OCI-LY7 (cell line): ENCODE measurements at regions of chr3 and their contacts with region 1.

Region 1: DNA sequence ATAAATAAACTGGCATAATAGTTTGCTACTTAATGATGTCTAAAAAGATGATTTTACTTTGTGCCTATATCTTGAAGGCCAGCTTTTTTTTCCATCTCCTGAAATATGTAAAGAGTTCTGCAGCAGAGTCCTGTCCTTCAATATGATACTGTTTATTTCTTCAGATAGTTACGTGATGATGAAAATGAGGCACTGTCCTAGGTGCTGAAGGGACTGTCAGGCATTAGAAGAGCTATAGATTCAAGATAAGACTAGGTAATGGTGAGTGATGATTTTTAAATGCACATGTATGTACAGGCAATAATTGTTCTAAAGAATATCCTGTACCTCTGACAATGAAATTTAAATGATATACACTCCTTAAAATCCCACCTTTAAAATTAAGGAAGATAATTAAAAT is 326.9 kb upstream of the DNAJC19 start:
- DNase-seq: peak; percentile 13
- H3K4me3 ChIP-seq: no peak overlapping the region
- H3K27ac ChIP-seq: no peak overlapping the region
- H3K4me1 ChIP-seq: peaks cover 3% of the 10 kb centered on the region
- CTCF ChIP-seq: no peak

Region 2: GRCh38 chr3:181230258-181230657 is 86.2 kb before region 1 on chr3:
- CTCF ChIA-PET with region 1: no interaction called
- POLR2A ChIA-PET with region 1: no interaction called
- intact Hi-C with region 1: no loop called
- DNase-seq: peak; percentile 1
- H3K4me3 ChIP-seq: no peak overlapping the region
- H3K27ac ChIP-seq: no peak overlapping the region
- H3K4me1 ChIP-seq: no peaks in the 10 kb centered on the region
- CTCF ChIP-seq: peak; percentile 45; the same call in 1 of the 2 replicates

Region 3: DNA sequence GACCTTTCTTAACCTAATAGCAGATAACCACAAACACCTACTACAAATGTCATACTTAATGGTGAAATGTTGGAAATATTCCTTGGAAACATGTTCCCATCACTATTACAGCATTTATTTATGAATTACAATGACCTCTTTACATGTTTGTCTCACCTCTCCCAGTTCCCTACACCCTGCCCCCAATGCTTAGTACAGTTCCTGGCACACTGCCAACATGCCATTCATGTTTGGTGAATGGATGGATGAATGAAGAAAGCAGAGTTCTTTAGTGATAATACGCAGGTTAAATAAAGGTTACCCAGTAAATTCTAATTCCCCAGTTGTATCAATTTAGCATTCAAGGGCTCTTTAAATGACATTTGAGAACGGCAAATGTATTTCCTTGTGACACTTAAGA is 1216.9 kb after region 1 on chr3:
- CTCF ChIA-PET with region 1: no interaction called
- POLR2A ChIA-PET with region 1: no interaction called
- intact Hi-C with region 1: loop called (anchors 5 kb)
- DNase-seq: no peak
- H3K4me3 ChIP-seq: no peak overlapping the region
- H3K27ac ChIP-seq: no peak overlapping the region
- H3K4me1 ChIP-seq: peaks cover 19% of the 10 kb centered on the region
- CTCF ChIP-seq: no peak